Activated CD4-positive, alpha-beta T cell treated with anti-CD3 and anti-CD28 coated beads for 36 hours (primary cell): ENCODE measurements at regions of chr10 and their contacts with region 1.

Region 1: GRCh38 chr10:71771821-71772617 is 1.3 kb downstream of the VSIR start:
- DNase-seq: peak; percentile 66
- ATAC-seq: no peak
- H3K4me3 Mint-ChIP-seq: peak overlapping the region; percentile 92
- H3K27ac Mint-ChIP-seq: peak overlapping the region; percentile 97
- H3K4me1 Mint-ChIP-seq: peaks cover 72% of the 10 kb centered on the region
- H3K27me3 Mint-ChIP-seq: no peaks in the 10 kb centered on the region

Region 2: GRCh38 chr10:71040846-71041605 is 731.0 kb before region 1 on chr10:
- CTCF ChIA-PET with region 1: no interaction called
- POLR2A ChIA-PET with region 1: no interaction called
- intact Hi-C with region 1: no loop called
- DNase-seq: no peak
- ATAC-seq: no peak
- H3K4me3 Mint-ChIP-seq: no peak overlapping the region
- H3K27ac Mint-ChIP-seq: no peak overlapping the region
- H3K4me1 Mint-ChIP-seq: no peaks in the 10 kb centered on the region
- H3K27me3 Mint-ChIP-seq: no peaks in the 10 kb centered on the region

Region 3: GRCh38 chr10:71378336-71379117 is 393.5 kb before region 1 on chr10:
- CTCF ChIA-PET with region 1: no interaction called
- POLR2A ChIA-PET with region 1: no interaction called
- intact Hi-C with region 1: loop called in 1 of 2 experiments (anchors 2 kb)
- DNase-seq: no peak
- ATAC-seq: no peak
- H3K4me3 Mint-ChIP-seq: no peak overlapping the region
- H3K27ac Mint-ChIP-seq: no peak overlapping the region
- H3K4me1 Mint-ChIP-seq: peaks cover 4% of the 10 kb centered on the region
- H3K27me3 Mint-ChIP-seq: no peaks in the 10 kb centered on the region

Region 4: GRCh38 chr10:71547876-71548846 is 223.9 kb before region 1 on chr10:
- CTCF ChIA-PET with region 1: no interaction called
- POLR2A ChIA-PET with region 1: no interaction called
- intact Hi-C with region 1: no loop called
- DNase-seq: peak; percentile 51
- ATAC-seq: peak; percentile 83
- H3K4me3 Mint-ChIP-seq: no peak overlapping the region
- H3K27ac Mint-ChIP-seq: no peak overlapping the region
- H3K4me1 Mint-ChIP-seq: no peaks in the 10 kb centered on the region
- H3K27me3 Mint-ChIP-seq: no peaks in the 10 kb centered on the region

Region 5: DNA sequence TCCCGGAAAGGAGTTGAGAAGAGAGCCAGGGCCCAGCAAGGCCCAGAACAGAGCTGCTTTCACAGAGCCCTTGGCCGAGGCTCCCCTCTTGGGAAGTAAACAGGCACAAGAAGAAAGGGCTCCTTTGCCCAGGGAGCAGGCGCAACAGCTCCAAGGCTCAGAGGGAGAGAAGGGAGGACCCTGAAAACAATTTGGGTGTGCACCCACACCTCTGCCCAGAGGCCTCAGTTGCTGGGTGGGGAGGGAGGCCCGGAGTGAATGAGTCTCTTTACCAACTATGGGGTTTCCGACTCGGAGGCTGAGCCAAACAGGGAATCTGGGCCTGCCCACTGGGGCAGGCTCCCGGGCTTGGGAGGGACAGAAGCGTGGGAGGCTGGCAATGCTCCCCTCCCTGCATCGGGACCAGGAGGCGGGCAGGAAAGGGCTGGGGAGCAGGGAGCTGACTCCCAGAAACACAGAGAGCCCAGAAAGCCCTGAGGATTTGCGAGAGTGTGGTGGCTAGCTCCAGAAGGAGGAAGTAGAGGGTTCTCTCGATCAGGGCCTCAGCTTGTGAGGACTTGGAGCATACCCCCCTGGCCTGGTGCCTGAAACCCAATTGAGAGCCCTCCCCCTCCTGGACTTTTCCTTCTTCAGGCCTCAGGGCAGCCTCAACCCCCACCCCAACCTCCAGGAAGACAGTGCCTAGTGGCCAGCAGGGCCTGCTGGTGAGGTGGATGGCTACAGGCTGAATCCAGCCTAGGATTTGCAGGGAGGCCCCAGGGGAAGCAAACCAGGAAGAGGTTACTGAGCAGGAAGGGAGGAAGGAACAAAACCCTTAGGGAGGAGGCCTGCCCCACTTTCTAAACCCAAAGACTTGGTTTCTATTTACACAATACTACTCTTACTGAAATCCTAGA is 58.6 kb before region 1 on chr10:
- CTCF ChIA-PET with region 1: interaction called, 13 read pairs
- POLR2A ChIA-PET with region 1: interaction called, 3 read pairs
- intact Hi-C with region 1: loop called in 1 of 2 experiments (anchors 1 kb)
- DNase-seq: peak; percentile 49
- ATAC-seq: peak; percentile 50
- H3K4me3 Mint-ChIP-seq: peak overlapping the region; percentile 61
- H3K27ac Mint-ChIP-seq: peak overlapping the region; percentile 98
- H3K4me1 Mint-ChIP-seq: peaks cover 46% of the 10 kb centered on the region
- H3K27me3 Mint-ChIP-seq: no peaks in the 10 kb centered on the region

Region 6: DNA sequence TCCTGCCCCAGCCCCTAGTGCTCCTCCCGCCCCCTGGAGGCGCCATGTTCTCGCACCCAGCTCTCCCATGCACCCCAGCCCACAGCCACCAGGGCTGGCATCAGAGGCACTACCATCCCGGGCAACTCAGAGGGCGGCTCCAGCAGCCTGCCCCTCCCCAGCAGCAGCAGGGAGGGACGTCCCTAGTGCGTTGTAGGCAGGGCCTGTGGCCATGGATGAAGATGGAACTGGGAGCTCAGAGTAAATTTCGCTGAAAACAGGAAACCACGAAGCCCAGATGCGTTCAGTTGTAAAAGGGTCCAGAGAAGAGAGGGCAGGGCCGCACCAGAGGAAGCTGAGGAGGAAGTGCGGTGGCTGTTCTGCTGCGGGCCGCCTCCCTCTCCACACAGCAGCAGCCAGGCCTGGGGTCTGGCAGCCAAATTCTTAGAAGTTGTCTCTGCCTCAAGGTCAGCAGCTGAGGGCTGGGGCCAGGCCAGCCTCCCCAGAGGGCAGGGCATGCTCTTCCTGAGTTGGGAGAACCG is 23.3 kb before region 1 on chr10:
- CTCF ChIA-PET with region 1: interaction called, 11 read pairs
- POLR2A ChIA-PET with region 1: interaction called, 8 read pairs
- intact Hi-C with region 1: loop called (anchors 1 to 2 kb)
- DNase-seq: peak; percentile 90
- ATAC-seq: peak; percentile 91
- H3K4me3 Mint-ChIP-seq: peak overlapping the region; percentile 68
- H3K27ac Mint-ChIP-seq: peak overlapping the region; percentile 99
- H3K4me1 Mint-ChIP-seq: peaks cover 97% of the 10 kb centered on the region
- H3K27me3 Mint-ChIP-seq: no peaks in the 10 kb centered on the region

Region 7: DNA sequence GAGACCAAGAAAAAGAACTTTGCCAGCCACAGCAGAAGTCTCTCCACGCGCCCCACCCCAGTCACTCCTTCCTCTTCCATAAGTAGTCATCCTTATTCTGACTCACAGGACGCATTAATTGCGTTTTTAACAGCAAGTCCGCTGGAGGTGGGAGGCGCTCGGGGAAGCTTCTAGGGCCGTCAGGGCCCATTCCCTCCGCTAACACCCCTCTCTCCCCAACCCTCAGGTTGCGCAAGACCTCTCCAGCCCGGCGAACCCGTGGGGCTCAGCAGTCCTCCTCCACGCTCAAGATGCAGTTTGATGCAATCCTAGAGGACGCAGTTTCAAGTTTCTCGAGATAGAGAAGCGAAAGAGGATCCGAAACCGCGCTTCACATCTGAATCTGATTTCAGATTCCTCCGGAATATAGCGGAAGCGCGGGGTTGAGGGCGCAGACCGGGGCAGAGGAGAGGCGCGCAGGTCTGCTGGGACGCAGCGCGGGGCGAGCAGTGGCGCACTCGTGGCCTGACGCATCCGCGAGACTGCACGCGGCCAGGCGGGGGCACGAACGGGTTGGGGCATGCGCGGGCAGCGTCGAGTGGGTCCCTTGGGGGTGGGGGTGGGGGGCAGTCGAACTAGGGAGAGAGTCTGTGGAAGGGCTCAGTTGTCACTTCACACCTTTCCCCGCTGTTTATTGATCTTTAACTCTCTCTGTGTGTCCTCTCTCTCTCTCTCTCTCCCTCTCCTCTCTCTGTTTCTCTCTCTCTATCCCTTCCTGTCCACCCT is 116.8 kb after region 1 on chr10:
- CTCF ChIA-PET with region 1: no interaction called
- POLR2A ChIA-PET with region 1: no interaction called
- intact Hi-C with region 1: loop called in 1 of 2 experiments (anchors 2 kb)
- DNase-seq: peak; percentile 84
- ATAC-seq: peak; percentile 95
- H3K4me3 Mint-ChIP-seq: peak overlapping the region; percentile 76
- H3K27ac Mint-ChIP-seq: peak overlapping the region; percentile 78
- H3K4me1 Mint-ChIP-seq: peaks cover 11% of the 10 kb centered on the region
- H3K27me3 Mint-ChIP-seq: peaks cover 3% of the 10 kb centered on the region